RWPE1 (cell line): ENCODE measurements at regions of chr15 and their contacts with region 1.

Region 1: DNA sequence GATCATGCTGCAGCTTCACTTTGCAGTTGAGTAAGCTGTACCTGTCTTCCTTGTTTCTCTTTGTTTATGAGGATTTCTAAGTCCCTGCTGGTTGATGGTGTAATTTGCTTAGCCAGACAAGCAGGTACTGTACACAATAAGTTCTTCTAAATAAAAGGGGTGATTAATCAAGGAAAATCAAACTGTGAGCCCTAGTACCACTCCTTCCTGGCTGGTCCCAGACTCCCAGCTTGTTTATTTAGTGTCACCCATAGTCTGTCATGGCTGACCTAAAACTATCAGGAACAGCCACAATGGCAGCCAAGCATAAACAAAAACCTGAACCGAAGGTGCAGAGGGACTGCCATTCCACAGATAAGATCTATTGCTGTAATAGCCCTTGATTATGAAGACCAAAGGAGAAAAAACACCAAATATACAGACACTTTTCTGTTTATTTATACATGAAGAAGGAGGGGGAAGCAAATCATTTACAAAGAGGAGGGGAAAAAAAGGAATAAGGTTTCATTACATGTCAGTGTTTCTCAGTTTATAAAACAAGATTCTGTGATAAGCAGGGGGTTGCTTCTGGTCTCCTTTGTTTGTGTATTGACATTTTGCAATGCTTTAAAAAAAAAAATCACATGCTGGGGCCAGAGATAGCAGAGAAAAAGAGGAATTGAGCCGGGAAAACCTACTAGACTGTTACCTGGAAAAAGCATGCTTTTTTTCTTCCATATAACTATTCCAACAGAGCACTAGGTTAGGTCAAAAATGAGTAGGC is 182.4 kb upstream of the DPH6 start:
- DNase-seq: no peak
- H3K27ac ChIP-seq: no peak overlapping the region
- CTCF ChIP-seq: no peak

Region 2: DNA sequence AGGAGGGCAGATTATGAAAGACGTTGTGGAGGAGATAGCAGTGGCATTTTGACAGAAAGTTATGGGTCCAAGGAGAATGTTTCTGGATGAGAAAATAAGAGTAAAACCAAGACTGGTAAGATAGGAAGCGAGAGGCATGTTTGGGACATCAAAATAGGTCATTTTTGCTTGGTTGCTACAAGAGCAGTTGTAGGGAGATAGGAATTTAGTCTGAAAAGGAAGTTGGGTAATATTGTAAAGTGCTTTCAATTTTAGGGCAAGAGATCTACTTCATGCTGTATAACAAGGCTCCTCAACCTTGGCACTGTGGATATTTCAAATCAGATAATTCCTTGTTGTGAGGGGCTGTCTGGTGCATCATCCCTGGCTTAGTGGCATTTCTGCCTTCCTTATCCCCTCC is 64.4 kb before region 1 on chr15:
- CTCF ChIA-PET with region 1: interaction called, 10 read pairs
- POLR2A ChIA-PET with region 1: no interaction called
- DNase-seq: no peak
- H3K27ac ChIP-seq: no peak overlapping the region
- CTCF ChIP-seq: no peak

Region 3: GRCh38 chr15:35757765-35758164 is 29.4 kb after region 1 on chr15:
- CTCF ChIA-PET with region 1: no interaction called
- POLR2A ChIA-PET with region 1: no interaction called
- DNase-seq: no peak
- H3K27ac ChIP-seq: no peak overlapping the region
- CTCF ChIP-seq: no peak

Region 4: DNA sequence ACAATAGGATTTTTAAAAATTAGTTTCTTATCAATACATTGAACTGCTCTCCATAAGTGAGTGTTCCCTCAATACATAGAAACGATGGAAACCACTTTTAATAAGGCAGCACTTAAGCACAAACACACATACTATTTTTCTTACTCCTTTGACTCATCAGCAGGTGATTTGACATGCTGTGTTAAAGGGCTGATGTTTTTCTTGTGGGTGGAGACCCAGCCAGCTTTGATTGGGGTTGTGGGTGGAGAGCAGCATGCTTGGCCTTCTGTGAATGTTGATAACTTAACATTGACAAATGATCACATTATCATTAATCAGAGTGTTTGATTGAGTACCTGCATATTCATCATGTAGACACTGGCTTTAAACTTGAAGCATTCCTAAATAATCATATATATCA is 40.6 kb after region 1 on chr15:
- CTCF ChIA-PET with region 1: no interaction called
- POLR2A ChIA-PET with region 1: no interaction called
- DNase-seq: no peak
- H3K27ac ChIP-seq: no peak overlapping the region
- CTCF ChIP-seq: no peak